Activated CD8-positive, alpha-beta T cell treated with anti-CD3 and anti-CD28 coated beads, Interleukin-2, amount 10 ng/mL, durations not matched to agents 7 days and 5 days (primary cell): ENCODE measurements at regions of chr2 and their contacts with region 1.

Region 1: GRCh38 chr2:204024503-204024902 is 87.9 kb downstream of the ICOS start:
- DNase-seq: no peak
- ATAC-seq: no peak
- H3K4me3 Mint-ChIP-seq: no peak overlapping the region
- H3K27ac Mint-ChIP-seq: no peak overlapping the region
- H3K4me1 Mint-ChIP-seq: peaks cover 25% of the 10 kb centered on the region
- H3K27me3 Mint-ChIP-seq: no peaks in the 10 kb centered on the region

Region 2: DNA sequence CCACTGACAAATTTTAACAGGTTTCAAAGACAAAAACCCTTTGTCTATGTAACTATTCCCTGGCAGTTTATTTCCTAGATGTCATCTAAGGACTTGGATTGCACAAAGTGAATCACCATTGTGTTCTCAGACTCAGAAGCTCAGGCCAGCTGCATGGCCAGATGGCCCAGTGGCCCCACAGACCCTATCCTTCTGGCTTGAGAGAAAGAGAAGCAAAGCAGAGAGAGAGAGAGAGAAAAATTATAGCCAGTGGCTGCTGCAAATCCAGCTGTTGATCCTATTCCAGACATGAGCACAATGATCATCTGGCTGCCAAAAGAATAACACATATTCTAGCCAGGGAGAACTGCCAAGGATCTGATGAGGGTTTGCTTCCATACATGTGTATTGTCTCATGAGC is 131.1 kb before region 1 on chr2:
- CTCF ChIA-PET with region 1: no interaction called
- POLR2A ChIA-PET with region 1: no interaction called
- DNase-seq: no peak
- ATAC-seq: no peak
- H3K4me3 Mint-ChIP-seq: no peak overlapping the region
- H3K27ac Mint-ChIP-seq: peak overlapping the region; percentile 56
- H3K4me1 Mint-ChIP-seq: peaks cover 41% of the 10 kb centered on the region
- H3K27me3 Mint-ChIP-seq: no peaks in the 10 kb centered on the region

Region 3: DNA sequence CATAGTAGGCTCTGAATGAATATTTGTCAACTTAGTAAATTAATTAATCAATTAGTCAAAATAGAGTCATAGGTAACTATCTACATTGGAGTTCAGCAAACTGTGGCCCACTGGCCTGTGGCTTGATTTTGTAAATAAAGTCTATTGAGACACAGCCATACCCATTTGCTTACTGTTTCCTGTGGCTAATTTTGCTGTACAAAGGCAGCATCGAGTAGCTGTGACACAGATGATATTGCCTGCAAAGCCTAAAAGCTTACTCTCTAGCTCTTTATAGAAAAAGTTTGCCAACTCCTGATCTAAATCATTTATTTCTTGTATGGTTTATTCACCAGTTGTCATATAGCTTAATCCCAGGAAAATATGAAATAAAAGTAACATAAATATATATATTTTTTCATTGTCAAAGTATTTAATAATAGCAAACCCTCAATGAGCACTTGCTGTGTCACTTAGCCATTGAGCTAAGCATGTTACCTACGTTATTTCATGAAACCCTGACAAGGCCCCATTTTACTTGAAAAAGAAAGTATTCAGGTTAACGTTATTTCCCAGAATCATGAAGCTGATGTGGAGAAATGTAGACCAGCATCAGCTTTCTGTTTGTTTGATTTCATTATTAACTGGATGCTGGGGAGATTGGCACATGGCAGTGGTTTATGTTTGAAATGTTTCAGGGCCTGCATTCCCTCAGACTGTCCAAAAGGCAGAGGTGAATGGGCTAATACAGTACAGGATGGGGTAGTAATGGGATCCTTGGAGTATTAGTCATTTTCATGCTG is 18.4 kb before region 1 on chr2:
- CTCF ChIA-PET with region 1: interaction called, 10 read pairs
- POLR2A ChIA-PET with region 1: no interaction called
- DNase-seq: no peak
- ATAC-seq: peak; percentile 63
- H3K4me3 Mint-ChIP-seq: no peak overlapping the region
- H3K27ac Mint-ChIP-seq: peak overlapping the region; percentile 83
- H3K4me1 Mint-ChIP-seq: peaks cover 59% of the 10 kb centered on the region
- H3K27me3 Mint-ChIP-seq: no peaks in the 10 kb centered on the region

Region 4: GRCh38 chr2:204268458-204268857 is 244.0 kb after region 1 on chr2:
- CTCF ChIA-PET with region 1: no interaction called
- POLR2A ChIA-PET with region 1: no interaction called
- DNase-seq: no peak
- ATAC-seq: no peak
- H3K4me3 Mint-ChIP-seq: no peak overlapping the region
- H3K27ac Mint-ChIP-seq: no peak overlapping the region
- H3K4me1 Mint-ChIP-seq: no peaks in the 10 kb centered on the region
- H3K27me3 Mint-ChIP-seq: peaks cover 38% of the 10 kb centered on the region